ENCODE measurements at regions of chr19 and their contacts with region 1.

Region 1: GRCh38 chr19:49443366-49444099 is 2.2 kb upstream of the SLC17A7 start:
- DNase-seq: peak; percentile 89
- H3K4me3 ChIP-seq: peak overlapping the region; percentile 66 to 88 (median 82)
- H3K27ac ChIP-seq: peak overlapping the region; percentile 54
- H3K4me1 ChIP-seq: no peaks in the 10 kb centered on the region
- H3K27me3 ChIP-seq: peaks cover 11% of the 10 kb centered on the region
- CTCF ChIP-seq: peak; percentile 66 to 91

Region 2: DNA sequence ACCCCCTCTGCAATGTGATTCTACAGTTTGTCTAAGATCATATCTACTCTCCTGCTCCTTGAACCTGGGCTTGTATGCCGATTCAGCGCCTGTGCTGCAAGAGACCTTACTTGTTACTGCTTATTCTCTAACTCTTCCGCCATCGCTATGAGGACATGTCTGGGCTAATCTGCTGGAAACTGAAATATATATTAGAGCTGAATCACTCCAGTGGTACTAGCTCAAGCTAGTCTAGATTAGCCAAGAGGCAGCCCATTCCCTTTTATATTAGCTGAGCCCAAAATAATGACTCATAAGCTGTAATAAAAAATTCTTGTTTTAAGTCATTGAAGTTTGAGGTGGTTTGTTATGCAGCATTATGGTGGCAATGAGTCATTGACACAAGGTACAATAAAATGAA is 171.3 kb before region 1 on chr19:
- CTCF ChIA-PET with region 1: no interaction called
- dilution Hi-C with region 1: no loop called
- in situ Hi-C with region 1: loop called in 1 of 2 experiments (anchors 25 kb)
- intact Hi-C with region 1: no loop called
- DNase-seq: peak; percentile 97
- H3K4me3 ChIP-seq: no peak overlapping the region
- H3K27ac ChIP-seq: peak overlapping the region; percentile 69
- H3K4me1 ChIP-seq: peaks cover 22% of the 10 kb centered on the region
- H3K27me3 ChIP-seq: no peaks in the 10 kb centered on the region
- CTCF ChIP-seq: no peak

Region 3: DNA sequence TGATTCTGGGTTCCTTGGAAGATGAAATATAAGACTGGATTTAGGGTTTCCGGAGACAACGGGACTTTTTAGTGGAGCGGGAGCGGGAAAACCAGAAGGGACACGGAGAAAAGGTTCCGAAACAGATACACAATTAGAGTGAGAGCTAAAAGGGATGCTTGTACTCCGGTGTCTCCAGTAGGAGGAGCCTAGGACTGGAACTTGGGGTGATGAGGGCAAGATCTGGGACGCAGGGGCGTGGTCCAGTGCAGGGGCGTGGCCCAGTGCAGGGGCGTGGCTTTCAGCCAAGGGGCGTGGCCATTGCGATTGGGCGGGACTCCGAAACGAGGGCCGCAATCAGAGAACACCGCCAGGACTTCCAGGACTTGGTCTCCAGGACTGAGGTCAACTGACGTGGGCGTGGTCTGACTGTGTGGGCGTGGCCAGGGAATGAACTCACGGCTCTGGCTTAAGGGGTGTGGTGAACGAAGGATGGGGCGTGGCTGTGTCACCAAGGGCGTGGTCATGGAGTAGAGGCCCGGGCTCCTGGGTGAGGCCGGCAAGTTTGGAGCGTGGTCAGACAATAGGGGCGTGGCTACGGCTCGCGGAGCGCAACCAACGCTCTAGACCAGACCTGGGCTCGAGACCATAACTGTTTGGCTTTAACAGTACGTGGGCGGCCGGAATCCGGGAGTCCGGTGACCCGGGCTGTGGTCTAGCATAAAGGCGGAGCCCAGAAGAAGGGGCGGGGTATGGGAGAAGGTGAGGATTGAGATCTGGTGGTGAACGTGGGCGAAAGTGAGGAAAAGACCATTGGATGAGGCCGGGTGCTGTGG is 80.1 kb before region 1 on chr19 and contains the start of gene DKKL1:
- CTCF ChIA-PET with region 1: no interaction called
- dilution Hi-C with region 1: no loop called
- in situ Hi-C with region 1: no loop called
- intact Hi-C with region 1: loop called (anchors 1 kb)
- DNase-seq: peak; percentile 99
- H3K4me3 ChIP-seq: peak within 1 kb of the TSS; percentile 70 to 98 (median 77)
- H3K27ac ChIP-seq: peak within 1 kb of the TSS; percentile 51
- H3K4me1 ChIP-seq: peaks cover 4% of the 10 kb centered on the region
- H3K27me3 ChIP-seq: no peaks in the 10 kb centered on the region
- CTCF ChIP-seq: peak in 1 of 2 donors; percentile 38
- total RNA-seq, gene DKKL1: not detected

Region 4: GRCh38 chr19:49421039-49421877 is 22.3 kb before region 1 on chr19:
- CTCF ChIA-PET with region 1: no interaction called
- dilution Hi-C with region 1: no loop called
- in situ Hi-C with region 1: no loop called
- intact Hi-C with region 1: loop called (anchors 2 kb)
- DNase-seq: peak; percentile 43
- H3K4me3 ChIP-seq: peak overlapping the region in 2 of 3 experiments; percentile 18 to 37
- H3K27ac ChIP-seq: no peak overlapping the region
- H3K4me1 ChIP-seq: peaks cover 7% of the 10 kb centered on the region
- H3K27me3 ChIP-seq: peaks cover 41% of the 10 kb centered on the region
- CTCF ChIP-seq: no peak

Region 5: GRCh38 chr19:50449236-50449899 is 1005.8 kb after region 1 on chr19:
- CTCF ChIA-PET with region 1: no interaction called
- dilution Hi-C with region 1: no loop called
- in situ Hi-C with region 1: no loop called
- intact Hi-C with region 1: no loop called
- DNase-seq: no peak
- H3K4me3 ChIP-seq: no peak overlapping the region
- H3K27ac ChIP-seq: no peak overlapping the region
- H3K4me1 ChIP-seq: no peaks in the 10 kb centered on the region
- H3K27me3 ChIP-seq: no peaks in the 10 kb centered on the region
- CTCF ChIP-seq: no peak

Measured in mammary epithelial cell (primary cell).